Activated CD4-positive, alpha-beta T cell treated with anti-CD3 and anti-CD28 coated beads for 36 hours (primary cell): ENCODE measurements at regions of chr6 and their contacts with region 1.

Region 1: DNA sequence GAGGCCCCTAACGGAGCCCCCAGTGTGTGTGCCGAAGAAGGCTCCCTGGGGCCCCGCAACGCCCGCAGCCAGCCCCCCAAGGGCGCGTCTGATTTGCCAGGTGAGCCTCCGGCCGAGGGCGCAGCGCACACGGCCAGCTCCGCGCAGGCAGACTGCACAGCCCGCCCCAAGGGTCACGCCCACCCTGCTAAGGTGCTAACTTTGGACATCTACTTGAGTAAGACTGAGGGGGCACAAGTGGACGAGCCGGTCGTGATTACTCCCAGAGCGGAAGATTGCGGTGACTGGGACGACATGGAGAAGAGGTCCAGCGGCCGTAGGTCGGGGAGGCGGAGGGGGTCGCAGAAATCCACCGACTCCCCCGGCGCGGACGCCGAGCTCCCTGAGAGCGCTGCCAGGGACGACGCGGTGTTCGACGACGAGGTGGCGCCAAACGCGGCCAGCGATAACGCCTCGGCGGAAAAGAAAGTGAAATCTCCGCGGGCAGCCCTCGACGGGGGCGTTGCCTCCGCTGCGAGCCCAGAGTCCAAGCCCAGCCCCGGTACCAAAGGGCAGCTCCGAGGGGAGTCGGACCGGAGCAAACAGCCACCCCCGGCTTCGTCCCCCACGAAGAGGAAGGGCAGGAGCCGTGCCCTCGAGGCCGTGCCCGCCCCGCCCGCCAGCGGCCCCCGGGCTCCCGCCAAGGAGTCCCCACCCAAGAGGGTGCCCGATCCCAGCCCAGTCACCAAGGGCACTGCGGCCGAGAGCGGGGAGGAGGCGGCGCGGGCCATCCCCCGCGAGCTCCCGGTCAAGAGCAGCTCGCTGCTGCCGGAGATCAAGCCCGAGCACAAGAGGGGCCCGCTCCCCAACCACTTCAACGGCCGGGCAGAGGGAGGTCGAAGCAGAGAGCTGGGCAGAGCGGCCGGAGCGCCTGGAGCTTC is 117.0 kb downstream of the RTN4IP1 start:
- DNase-seq: peak; percentile 89
- ATAC-seq: peak; percentile 61
- H3K4me3 Mint-ChIP-seq: peak overlapping the region; percentile 87
- H3K27ac Mint-ChIP-seq: peak overlapping the region; percentile 93
- H3K4me1 Mint-ChIP-seq: peaks cover 50% of the 10 kb centered on the region
- H3K27me3 Mint-ChIP-seq: peaks cover 5% of the 10 kb centered on the region

Region 2: GRCh38 chr6:106325336-106326178 is 186.8 kb before region 1 on chr6 and contains the start of gene ATG5:
- CTCF ChIA-PET with region 1: no interaction called
- POLR2A ChIA-PET with region 1: no interaction called
- intact Hi-C with region 1: loop called (anchors 5 kb)
- DNase-seq: peak; percentile 100
- ATAC-seq: peak; percentile 96
- H3K4me3 Mint-ChIP-seq: peak within 1 kb of the TSS; percentile 99
- H3K27ac Mint-ChIP-seq: peak within 1 kb of the TSS; percentile 98
- H3K4me1 Mint-ChIP-seq: peaks cover 39% of the 10 kb centered on the region
- H3K27me3 Mint-ChIP-seq: peaks cover 8% of the 10 kb centered on the region
- total RNA-seq, gene ATG5: 27.2 to 31.6 TPM

Region 3: DNA sequence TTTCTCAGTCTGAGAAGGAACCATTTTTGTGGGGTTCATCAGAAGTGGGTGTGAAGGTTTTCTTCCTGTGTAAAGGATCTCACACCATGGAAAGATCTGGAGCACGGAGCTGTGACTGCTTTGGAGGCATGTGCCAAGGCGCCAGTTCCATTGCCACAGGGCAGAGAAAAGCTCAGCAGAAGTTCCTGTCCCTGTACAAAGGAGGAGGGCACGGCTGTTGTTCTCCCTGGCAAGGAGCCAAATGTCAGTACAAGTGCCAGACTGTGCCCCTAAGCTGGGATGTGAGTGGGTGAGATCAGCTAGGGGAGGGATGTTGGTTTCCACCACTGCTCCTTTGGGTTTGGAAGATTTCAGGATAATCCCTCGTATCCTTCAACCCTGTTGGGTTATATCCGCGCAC is 34.5 kb before region 1 on chr6:
- CTCF ChIA-PET with region 1: interaction called, 15 read pairs
- POLR2A ChIA-PET with region 1: interaction called, 6 read pairs
- intact Hi-C with region 1: loop called (anchors 2 kb)
- DNase-seq: no peak
- ATAC-seq: no peak
- H3K4me3 Mint-ChIP-seq: no peak overlapping the region
- H3K27ac Mint-ChIP-seq: no peak overlapping the region
- H3K4me1 Mint-ChIP-seq: peaks cover 9% of the 10 kb centered on the region
- H3K27me3 Mint-ChIP-seq: no peaks in the 10 kb centered on the region

Region 4: GRCh38 chr6:106539936-106540335 is 27.6 kb after region 1 on chr6:
- CTCF ChIA-PET with region 1: interaction called, 10 read pairs
- POLR2A ChIA-PET with region 1: interaction called, 5 read pairs
- intact Hi-C with region 1: loop called in 1 of 2 experiments (anchors 2 kb)
- DNase-seq: no peak
- ATAC-seq: no peak
- H3K4me3 Mint-ChIP-seq: no peak overlapping the region
- H3K27ac Mint-ChIP-seq: no peak overlapping the region
- H3K4me1 Mint-ChIP-seq: peaks cover 46% of the 10 kb centered on the region
- H3K27me3 Mint-ChIP-seq: no peaks in the 10 kb centered on the region

Region 5: GRCh38 chr6:106561686-106562405 is 49.5 kb after region 1 on chr6:
- CTCF ChIA-PET with region 1: interaction called, 43 read pairs
- POLR2A ChIA-PET with region 1: no interaction called
- intact Hi-C with region 1: loop called in 1 of 2 experiments (anchors 5 kb)
- DNase-seq: no peak
- ATAC-seq: no peak
- H3K4me3 Mint-ChIP-seq: no peak overlapping the region
- H3K27ac Mint-ChIP-seq: no peak overlapping the region
- H3K4me1 Mint-ChIP-seq: peaks cover 20% of the 10 kb centered on the region
- H3K27me3 Mint-ChIP-seq: no peaks in the 10 kb centered on the region

Region 6: DNA sequence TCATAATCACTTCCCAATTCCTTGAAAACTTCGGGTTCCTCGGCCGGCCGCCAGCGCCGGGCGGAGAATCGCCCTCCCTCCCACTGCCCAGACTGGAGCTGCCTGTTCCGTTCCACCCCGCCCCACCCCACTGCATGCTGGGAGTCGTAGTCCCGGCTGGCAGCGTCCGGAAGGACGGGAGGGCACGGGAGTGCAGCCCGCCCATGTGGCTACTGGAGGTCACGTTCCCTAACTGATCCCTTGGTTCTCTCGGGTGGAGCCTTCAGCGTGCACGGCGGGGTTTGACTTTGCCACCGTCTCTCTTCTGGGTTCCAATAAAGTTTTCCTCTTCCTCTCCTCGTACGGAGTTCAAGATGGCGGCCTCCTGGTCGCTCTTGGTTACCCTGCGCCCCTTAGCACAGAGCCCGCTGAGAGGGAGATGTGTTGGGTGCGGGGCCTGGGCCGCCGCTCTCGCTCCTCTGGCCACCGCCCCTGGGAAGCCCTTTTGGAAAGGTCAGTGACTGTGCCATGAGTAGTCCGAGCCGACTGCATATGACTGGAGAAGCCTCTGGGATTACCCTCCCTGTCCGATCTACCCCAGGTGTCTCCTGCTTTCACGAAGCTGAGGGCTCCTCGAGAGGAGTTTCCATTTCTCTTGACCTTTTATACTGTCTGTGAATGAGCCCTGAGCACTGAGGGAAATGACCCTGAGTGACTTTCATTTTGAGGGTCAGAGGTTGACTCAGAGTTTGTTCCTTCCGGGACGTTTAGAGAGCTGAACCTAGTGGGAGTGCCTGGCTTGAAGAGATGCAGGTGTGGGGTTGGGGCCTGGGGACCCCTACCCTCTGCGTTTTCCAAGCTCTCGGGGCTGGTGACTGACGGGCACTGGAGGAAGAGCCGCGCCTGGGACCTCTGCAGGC is 1782.7 kb after region 1 on chr6 and contains the start of gene AFG1L:
- CTCF ChIA-PET with region 1: no interaction called
- POLR2A ChIA-PET with region 1: no interaction called
- intact Hi-C with region 1: loop called in 1 of 2 experiments (anchors 10 kb)
- DNase-seq: peak; percentile 93
- ATAC-seq: peak; percentile 92
- H3K4me3 Mint-ChIP-seq: peak within 1 kb of the TSS; percentile 99
- H3K27ac Mint-ChIP-seq: peak within 1 kb of the TSS; percentile 100
- H3K4me1 Mint-ChIP-seq: peaks cover 13% of the 10 kb centered on the region
- H3K27me3 Mint-ChIP-seq: no peaks in the 10 kb centered on the region
- total RNA-seq, gene AFG1L: 6.6 TPM